CD4-positive, alpha-beta T cell (primary cell): ENCODE measurements at regions of chrX and their contacts with region 1.

Region 1: DNA sequence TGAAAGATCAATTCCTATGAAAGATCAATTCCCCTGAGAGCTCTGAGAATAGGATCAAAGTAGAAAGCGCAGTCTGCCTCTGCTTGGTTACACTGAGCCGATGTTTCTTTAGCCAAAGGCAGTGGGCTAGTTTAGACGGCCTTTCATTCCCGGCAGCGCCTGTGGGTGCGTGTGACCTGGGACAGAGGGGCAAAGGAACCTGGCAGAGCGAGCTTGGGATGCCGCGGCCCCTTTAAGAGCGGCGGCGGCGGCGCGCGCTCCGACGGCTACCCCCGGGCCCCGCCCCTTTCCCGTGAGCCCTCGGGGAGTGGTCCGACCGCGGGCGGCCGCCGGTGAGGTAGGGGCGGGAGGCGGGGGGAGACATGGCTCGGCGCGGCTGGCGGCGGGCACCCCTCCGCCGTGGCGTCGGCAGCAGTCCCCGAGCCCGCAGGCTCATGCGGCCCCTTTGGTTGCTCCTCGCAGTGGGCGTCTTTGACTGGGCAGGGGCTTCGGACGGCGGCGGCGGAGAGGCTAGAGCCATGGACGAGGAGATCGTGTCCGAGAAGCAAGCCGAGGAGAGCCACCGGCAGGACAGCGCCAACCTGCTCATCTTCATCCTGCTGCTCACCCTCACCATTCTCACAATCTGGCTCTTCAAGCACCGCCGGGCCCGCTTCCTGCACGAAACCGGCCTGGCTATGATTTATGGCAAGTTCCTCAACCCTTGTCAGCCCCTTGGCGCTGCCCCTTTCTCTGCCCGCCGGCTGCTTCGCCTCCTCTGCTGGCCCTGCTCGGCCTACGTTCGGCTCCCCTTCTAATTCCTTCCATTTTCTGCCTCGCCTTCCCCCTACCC is at the start of gene SLC9A6:
- DNase-seq: peak; percentile 38 to 83 (median 59)
- ATAC-seq: peak; percentile 84
- H3K4me3 ChIP-seq: peak within 1 kb of the TSS; percentile 87
- H3K4me3 Mint-ChIP-seq: peak within 1 kb of the TSS; percentile 97
- H3K27ac ChIP-seq: peak within 1 kb of the TSS; percentile 70
- H3K27ac Mint-ChIP-seq: peak within 1 kb of the TSS; percentile 89
- H3K4me1 ChIP-seq: peaks cover 31% of the 10 kb centered on the region
- H3K4me1 Mint-ChIP-seq: peaks cover 68% of the 10 kb centered on the region
- H3K27me3 ChIP-seq: no peaks in the 10 kb centered on the region
- H3K27me3 Mint-ChIP-seq: no peaks in the 10 kb centered on the region
- CTCF ChIP-seq: no peak
- total RNA-seq, gene SLC9A6: 17.8 to 20.0 TPM

Region 2: DNA sequence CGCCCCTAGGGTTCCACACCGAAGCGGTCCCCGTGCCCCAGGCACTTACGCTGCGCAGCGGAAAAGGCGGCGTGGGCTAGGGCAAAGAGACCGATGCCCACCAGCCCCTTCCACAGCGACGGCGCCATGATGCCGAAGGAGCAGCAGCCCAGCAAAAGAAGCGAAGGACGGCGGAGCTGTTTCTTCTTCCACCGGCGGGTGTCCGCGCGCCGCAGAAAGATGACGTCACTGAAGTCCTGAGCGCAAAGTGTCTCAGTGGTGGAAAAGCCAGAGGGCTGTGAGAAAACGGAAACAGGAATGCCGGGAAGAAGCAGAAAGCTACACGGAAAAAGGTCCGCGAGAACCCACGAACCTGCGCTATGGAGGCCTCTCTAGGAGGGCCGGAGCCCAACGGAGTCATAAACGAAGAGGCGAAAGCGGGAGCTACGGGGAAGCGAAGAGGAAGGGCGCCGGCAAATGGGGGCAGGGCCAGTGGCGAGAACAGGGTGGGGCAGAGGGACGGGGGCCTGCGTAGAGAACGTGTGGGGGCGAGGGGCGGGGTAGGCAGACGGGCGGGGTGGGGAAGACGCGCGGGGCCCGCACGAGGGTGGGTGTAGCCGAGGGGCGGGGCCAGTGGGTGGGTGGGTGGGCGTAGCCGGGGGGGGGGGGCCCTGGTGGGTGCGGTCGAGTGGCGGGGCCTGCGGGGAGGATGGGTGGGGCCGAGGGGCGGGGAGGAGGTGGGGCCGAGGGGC is 11.6 kb before region 1 on chrX and contains the start of gene MMGT1:
- CTCF ChIA-PET with region 1: interaction called, 4 read pairs
- POLR2A ChIA-PET with region 1: interaction called, 33 read pairs
- intact Hi-C with region 1: no loop called
- DNase-seq: peak; percentile 63 to 92 (median 76)
- ATAC-seq: peak; percentile 84
- H3K4me3 ChIP-seq: peak within 1 kb of the TSS; percentile 92
- H3K4me3 Mint-ChIP-seq: peak within 1 kb of the TSS; percentile 95
- H3K27ac ChIP-seq: peak within 1 kb of the TSS; percentile 79 to 89
- H3K27ac Mint-ChIP-seq: peak within 1 kb of the TSS; percentile 97
- H3K4me1 ChIP-seq: peaks cover 13% of the 10 kb centered on the region
- H3K4me1 Mint-ChIP-seq: peaks cover 48% of the 10 kb centered on the region
- H3K27me3 ChIP-seq: no peaks in the 10 kb centered on the region
- H3K27me3 Mint-ChIP-seq: no peaks in the 10 kb centered on the region
- CTCF ChIP-seq: no peak
- total RNA-seq, gene MMGT1: 36.4 to 37.0 TPM

Region 3: GRCh38 chrX:136147315-136147901 is 162.1 kb after region 1 on chrX and contains the start of gene FHL1:
- CTCF ChIA-PET with region 1: no interaction called
- POLR2A ChIA-PET with region 1: no interaction called
- intact Hi-C with region 1: loop called in 1 of 2 experiments (anchors 10 kb)
- DNase-seq: peak; percentile 18 to 78 (median 51)
- ATAC-seq: peak; percentile 72
- H3K4me3 ChIP-seq: peak within 1 kb of the TSS; percentile 69
- H3K4me3 Mint-ChIP-seq: peak within 1 kb of the TSS; percentile 90
- H3K27ac ChIP-seq: peak within 1 kb of the TSS in 1 of 2 donors; percentile 36
- H3K27ac Mint-ChIP-seq: peak within 1 kb of the TSS; percentile 90
- H3K4me1 ChIP-seq: peaks cover 23% of the 10 kb centered on the region
- H3K4me1 Mint-ChIP-seq: peaks cover 52% of the 10 kb centered on the region
- H3K27me3 ChIP-seq: no peaks in the 10 kb centered on the region
- H3K27me3 Mint-ChIP-seq: no peaks in the 10 kb centered on the region
- CTCF ChIP-seq: no peak
- total RNA-seq, gene FHL1: 27.2 to 28.4 TPM

Region 4: DNA sequence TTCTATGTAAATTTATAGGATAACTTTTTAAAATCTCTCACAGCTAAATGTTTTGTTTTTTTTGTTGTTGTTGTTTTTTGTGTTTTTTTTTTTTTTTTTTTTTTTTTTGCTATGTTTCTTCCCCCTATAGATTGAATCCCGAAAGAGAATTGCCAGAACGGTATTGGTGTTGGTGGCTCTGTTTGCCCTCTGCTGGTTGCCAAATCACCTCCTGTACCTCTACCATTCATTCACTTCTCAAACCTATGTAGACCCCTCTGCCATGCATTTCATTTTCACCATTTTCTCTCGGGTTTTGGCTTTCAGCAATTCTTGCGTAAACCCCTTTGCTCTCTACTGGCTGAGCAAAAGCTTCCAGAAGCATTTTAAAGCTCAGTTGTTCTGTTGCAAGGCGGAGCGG is 506.5 kb after region 1 on chrX:
- CTCF ChIA-PET with region 1: no interaction called
- POLR2A ChIA-PET with region 1: no interaction called
- intact Hi-C with region 1: loop called in 1 of 2 experiments (anchors 5 kb)
- DNase-seq: no peak
- ATAC-seq: no peak
- H3K4me3 ChIP-seq: no peak overlapping the region
- H3K4me3 Mint-ChIP-seq: no peak overlapping the region
- H3K27ac ChIP-seq: no peak overlapping the region
- H3K27ac Mint-ChIP-seq: no peak overlapping the region
- H3K4me1 ChIP-seq: peaks cover 5% of the 10 kb centered on the region
- H3K4me1 Mint-ChIP-seq: peaks cover 9% of the 10 kb centered on the region
- H3K27me3 ChIP-seq: peaks cover 0 to 25% of the 10 kb centered on the region in 2 experiments
- H3K27me3 Mint-ChIP-seq: peaks cover 34% of the 10 kb centered on the region
- CTCF ChIP-seq: no peak